Activated B cell treated with CpG ODN at 0.5 μM for 24 hours (primary cell): ENCODE measurements at regions of chr5 and their contacts with region 1.

Region 1: DNA sequence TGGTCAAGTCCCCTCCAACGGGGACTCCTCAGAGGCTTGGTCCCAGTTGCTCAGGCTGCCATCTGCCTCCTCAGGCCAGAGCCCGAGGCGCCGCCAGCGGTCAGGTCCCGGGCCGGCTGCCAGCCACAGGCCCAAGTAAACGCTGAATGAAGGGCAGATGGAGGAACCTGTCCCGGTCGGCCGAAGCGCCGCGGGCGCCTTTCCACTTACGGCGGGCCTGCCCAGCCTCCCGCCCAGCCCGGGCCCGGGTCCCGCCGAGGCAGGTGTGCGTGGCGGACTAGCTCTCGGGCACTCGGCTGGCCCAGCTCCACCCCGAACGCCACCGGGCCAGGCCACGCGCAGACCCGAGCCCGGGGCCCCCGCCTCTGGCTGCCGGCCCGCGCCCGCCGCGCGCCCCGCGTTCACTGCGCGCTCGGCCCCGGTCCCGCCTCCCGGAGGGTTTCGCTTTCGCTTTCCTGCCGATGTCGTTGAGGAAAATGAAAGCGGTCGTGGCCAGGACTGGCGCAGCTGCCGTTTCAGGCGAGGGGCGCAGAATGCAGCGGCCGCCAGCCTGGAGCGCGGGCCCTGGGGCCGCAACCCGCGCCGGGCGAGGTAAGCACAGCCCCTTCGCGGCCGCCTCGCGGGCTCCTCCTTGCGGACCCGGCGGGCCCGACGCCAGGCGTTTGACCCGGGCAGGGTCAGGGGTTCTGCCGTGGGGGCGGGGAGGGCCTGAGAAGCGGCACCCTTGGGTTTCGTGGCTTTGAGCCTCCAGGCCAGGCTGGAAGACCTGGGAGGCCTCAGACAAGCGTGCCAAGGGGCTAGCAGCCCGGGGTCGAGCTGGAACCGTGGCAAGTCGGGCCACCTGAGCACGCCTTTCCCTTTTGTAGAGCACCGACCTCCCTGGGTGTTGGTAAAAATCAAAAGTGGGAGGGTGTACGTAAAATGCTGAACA is 41.2 kb downstream of the SLC22A5 start:
- DNase-seq: peak; percentile 85
- ATAC-seq: peak; percentile 86
- H3K4me3 Mint-ChIP-seq: peak overlapping the region; percentile 94
- H3K27ac Mint-ChIP-seq: peak overlapping the region; percentile 99
- H3K4me1 Mint-ChIP-seq: peaks cover 75% of the 10 kb centered on the region
- H3K27me3 Mint-ChIP-seq: no peaks in the 10 kb centered on the region
- CTCF ChIP-seq: no peak

Region 2: DNA sequence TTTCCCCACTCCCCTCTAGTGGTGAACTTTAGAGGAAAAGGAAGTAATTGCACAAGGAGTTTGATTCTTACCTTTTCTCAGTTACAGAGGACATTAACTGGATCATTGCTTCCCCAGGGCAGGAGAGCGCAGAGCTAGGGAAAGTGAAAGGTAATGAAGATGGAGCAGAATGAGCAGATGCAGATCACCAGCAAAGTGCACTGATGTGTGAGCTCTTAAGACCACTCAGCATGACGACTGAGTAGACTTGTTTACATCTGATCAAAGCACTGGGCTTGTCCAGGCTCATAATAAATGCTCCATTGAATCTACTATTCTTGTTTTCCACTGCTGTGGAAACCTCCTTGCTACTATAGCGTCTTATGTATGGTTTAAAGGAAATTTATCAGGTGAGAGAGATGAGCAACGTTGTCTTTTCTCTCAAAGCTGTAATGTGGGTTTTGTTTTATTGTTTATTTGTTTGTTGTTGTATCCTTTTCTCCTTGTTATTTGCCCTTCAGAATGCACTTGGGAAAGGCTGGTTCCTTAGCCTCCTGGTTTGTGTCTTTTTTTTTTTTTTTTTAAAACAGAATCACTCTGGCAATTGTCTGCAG is 16.0 kb before region 1 on chr5:
- CTCF ChIA-PET with region 1: interaction called, 4 read pairs
- POLR2A ChIA-PET with region 1: interaction called, 11 read pairs
- intact Hi-C with region 1: loop called (anchors 2 kb)
- DNase-seq: no peak
- ATAC-seq: peak; percentile 91
- H3K4me3 Mint-ChIP-seq: peak overlapping the region; percentile 59
- H3K27ac Mint-ChIP-seq: peak overlapping the region; percentile 65
- H3K4me1 Mint-ChIP-seq: peaks cover 29% of the 10 kb centered on the region
- H3K27me3 Mint-ChIP-seq: no peaks in the 10 kb centered on the region
- CTCF ChIP-seq: no peak

Region 3: GRCh38 chr5:132445930-132446329 is 35.2 kb after region 1 on chr5:
- CTCF ChIA-PET with region 1: no interaction called
- POLR2A ChIA-PET with region 1: no interaction called
- intact Hi-C with region 1: no loop called
- DNase-seq: no peak
- ATAC-seq: no peak
- H3K4me3 Mint-ChIP-seq: no peak overlapping the region
- H3K27ac Mint-ChIP-seq: no peak overlapping the region
- H3K4me1 Mint-ChIP-seq: peaks cover 57% of the 10 kb centered on the region
- H3K27me3 Mint-ChIP-seq: no peaks in the 10 kb centered on the region
- CTCF ChIP-seq: no peak

Region 4: GRCh38 chr5:132456296-132457001 is 45.7 kb after region 1 on chr5:
- CTCF ChIA-PET with region 1: interaction called, 3 read pairs
- POLR2A ChIA-PET with region 1: interaction called, 30 read pairs
- intact Hi-C with region 1: no loop called
- DNase-seq: peak; percentile 56
- ATAC-seq: peak; percentile 78
- H3K4me3 Mint-ChIP-seq: peak overlapping the region; percentile 75
- H3K27ac Mint-ChIP-seq: peak overlapping the region; percentile 99
- H3K4me1 Mint-ChIP-seq: peaks cover 92% of the 10 kb centered on the region
- H3K27me3 Mint-ChIP-seq: no peaks in the 10 kb centered on the region
- CTCF ChIP-seq: no peak

Region 5: DNA sequence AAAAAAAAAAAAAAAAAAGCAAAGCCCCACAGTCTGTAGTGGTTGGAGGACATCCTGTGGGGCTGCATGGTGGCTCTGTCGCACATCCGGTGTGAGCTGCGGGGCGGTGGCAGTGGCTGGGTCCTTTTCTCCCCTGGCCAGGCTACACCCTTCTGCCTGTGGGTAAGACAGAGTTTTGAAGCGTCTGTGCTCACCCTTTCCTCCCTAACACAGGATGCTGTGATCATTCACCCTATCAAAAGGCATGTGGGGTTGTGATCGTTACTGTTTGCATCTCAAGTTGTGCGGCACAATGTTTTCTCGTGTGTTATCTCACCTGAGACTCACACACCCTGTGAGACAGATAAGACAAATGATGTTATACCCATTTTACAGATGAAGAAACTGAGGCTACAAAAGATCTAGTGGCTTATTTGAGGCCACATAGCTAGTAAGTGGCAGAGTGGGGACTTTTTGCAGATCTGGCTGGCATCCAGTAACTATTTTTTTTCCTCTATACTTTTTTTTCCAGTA is 62.4 kb after region 1 on chr5:
- CTCF ChIA-PET with region 1: interaction called, 4 read pairs
- POLR2A ChIA-PET with region 1: interaction called, 27 read pairs
- intact Hi-C with region 1: no loop called
- DNase-seq: peak; percentile 50
- ATAC-seq: peak; percentile 87
- H3K4me3 Mint-ChIP-seq: peak overlapping the region; percentile 50
- H3K27ac Mint-ChIP-seq: peak overlapping the region; percentile 91
- H3K4me1 Mint-ChIP-seq: peaks cover 78% of the 10 kb centered on the region
- H3K27me3 Mint-ChIP-seq: no peaks in the 10 kb centered on the region
- CTCF ChIP-seq: no peak

Region 6: GRCh38 chr5:132866342-132867045 is 455.8 kb after region 1 on chr5 and contains the starts of genes GDF9 and UQCRQ:
- CTCF ChIA-PET with region 1: no interaction called
- POLR2A ChIA-PET with region 1: no interaction called
- intact Hi-C with region 1: loop called (anchors 1 kb)
- DNase-seq: peak; percentile 77
- ATAC-seq: peak; percentile 98
- H3K4me3 Mint-ChIP-seq: peak within 1 kb of the TSS; percentile 99
- H3K27ac Mint-ChIP-seq: peak within 1 kb of the TSS; percentile 98
- H3K4me1 Mint-ChIP-seq: peaks cover 25% of the 10 kb centered on the region
- H3K27me3 Mint-ChIP-seq: no peaks in the 10 kb centered on the region
- CTCF ChIP-seq: no peak
- total RNA-seq, gene GDF9: 0.29 and 0.39 TPM in 2 replicates
- total RNA-seq, gene UQCRQ: 197 and 218 TPM in 2 replicates